ENCODE measurements at regions of chr17 and their contacts with region 1.

Region 1: DNA sequence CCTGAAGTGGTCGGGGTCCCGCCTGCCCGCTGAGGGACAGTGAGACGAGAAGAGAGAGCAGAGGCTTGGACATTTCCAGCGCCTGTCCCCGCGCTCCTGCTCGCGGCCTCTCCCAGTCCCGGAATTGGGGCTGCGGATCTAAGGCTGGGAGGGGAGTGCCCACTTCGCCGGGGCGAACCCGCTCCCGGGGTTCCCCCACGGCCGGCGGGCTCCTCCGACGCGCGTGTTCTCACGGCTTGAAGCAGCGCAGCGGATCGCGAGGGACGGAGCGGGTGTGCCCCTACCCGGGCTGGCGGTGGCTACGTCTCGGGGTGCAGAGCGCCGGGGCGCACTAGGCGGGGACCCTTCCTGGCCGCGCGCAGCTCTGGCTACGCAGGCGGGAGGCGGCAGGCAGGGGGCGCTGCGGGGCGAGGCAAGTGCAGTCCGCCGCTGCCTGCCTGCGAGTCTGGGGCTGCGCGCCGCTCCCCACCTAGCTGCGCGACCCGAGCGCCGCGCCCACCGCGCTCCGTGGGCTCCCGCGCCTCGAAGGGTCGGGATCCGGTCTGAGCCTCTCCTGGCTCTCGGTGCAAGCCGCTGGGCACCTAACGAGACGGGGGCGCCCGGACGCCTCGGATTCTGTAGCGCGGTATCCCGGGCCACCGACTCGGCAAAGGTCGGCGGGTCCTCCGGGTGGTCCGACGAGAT is 1.2 kb downstream of the NGFR start:
- DNase-seq: peak; percentile 89
- ATAC-seq: peak; percentile 83
- H3K4me3 Mint-ChIP-seq: peak overlapping the region; percentile 63
- H3K27ac Mint-ChIP-seq: no peak overlapping the region
- H3K4me1 Mint-ChIP-seq: peaks cover 22% of the 10 kb centered on the region
- H3K27me3 Mint-ChIP-seq: peaks cover 59% of the 10 kb centered on the region
- CTCF ChIP-seq: peak; percentile 86

Region 2: DNA sequence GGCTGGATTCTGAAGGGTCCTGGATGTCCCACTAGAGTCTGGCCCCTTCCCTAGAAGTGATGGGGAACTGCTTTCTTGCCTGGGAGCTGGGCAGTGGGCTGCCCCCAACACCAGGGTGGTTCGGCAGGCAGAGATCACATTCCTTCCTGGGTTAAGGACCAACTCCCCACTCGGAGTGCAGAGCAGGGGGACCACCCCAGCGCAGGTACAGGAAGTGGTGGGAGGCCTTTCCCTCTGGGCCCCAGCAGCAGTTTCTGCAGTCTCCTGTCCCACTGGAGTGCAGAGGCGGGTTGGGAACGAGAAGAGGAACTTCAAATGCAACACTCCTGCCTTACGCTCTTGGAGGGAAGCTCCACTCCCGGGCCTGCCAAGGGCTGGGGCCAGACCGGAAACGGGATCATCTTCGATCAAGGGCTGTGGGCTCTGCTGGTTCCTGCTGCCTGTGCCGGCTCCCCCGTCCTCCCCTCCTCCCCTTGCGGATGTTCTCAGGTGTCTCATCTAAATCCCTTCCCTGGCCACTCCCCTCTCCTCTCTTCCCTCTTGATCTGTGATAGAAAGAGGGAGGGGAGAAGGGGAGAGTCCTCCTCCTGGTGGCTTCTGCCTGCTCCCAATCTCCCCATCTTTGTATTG is 10.2 kb before region 1 on chr17:
- CTCF ChIA-PET with region 1: interaction called, 10 read pairs
- POLR2A ChIA-PET with region 1: no interaction called
- intact Hi-C with region 1: no loop called
- DNase-seq: peak; percentile 12
- ATAC-seq: no peak
- H3K4me3 Mint-ChIP-seq: no peak overlapping the region
- H3K27ac Mint-ChIP-seq: no peak overlapping the region
- H3K4me1 Mint-ChIP-seq: peaks cover 6% of the 10 kb centered on the region
- H3K27me3 Mint-ChIP-seq: peaks cover 36% of the 10 kb centered on the region
- CTCF ChIP-seq: no peak

Region 3: DNA sequence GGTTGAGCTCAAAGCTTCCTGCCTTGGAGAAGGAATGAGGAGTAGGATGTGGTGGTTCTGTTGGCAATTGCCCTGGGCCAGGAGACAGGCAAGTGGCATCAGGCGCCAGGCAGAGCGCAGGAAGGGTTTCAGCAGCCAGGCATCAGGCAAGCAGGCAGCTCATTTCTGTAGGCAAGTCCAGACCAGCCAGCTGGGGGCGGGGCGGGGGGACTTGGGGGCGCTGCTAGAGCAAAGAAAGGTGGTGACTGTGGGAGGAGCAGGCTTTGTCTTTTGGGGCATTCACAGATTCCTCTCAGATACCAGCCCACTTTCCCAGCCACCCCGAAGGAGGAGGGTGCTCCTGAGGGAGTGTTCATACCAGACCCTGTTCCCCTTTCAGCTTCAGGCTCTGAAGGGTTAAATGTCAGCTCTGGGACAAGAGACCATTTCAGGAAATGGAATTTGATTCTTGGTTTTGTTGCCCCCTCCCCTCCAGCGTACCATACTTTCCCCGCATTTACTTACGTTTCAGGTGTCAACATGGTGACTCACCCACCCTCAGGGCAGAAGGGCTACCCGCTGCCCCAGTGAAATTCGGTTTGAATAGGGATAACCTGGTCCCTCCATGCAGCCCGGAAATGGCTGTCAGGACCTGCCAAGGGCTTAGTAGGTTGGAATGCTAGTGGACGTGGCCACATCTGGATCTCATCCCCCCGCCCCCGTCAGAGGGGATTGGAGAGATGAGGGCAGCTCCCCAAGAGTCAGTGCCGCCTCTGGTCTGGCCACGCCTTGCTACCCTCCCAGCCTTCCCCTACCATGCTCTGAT is 11.9 kb after region 1 on chr17:
- CTCF ChIA-PET with region 1: interaction called, 39 read pairs
- POLR2A ChIA-PET with region 1: interaction called, 6 read pairs
- intact Hi-C with region 1: no loop called
- DNase-seq: no peak
- ATAC-seq: no peak
- H3K4me3 Mint-ChIP-seq: no peak overlapping the region
- H3K27ac Mint-ChIP-seq: no peak overlapping the region
- H3K4me1 Mint-ChIP-seq: no peaks in the 10 kb centered on the region
- H3K27me3 Mint-ChIP-seq: peaks cover 30% of the 10 kb centered on the region
- CTCF ChIP-seq: no peak

Region 4: GRCh38 chr17:49667854-49668253 is 171.5 kb after region 1 on chr17:
- CTCF ChIA-PET with region 1: no interaction called
- POLR2A ChIA-PET with region 1: no interaction called
- intact Hi-C with region 1: no loop called
- DNase-seq: no peak
- ATAC-seq: peak; percentile 37
- H3K4me3 Mint-ChIP-seq: no peak overlapping the region
- H3K27ac Mint-ChIP-seq: peak overlapping the region; percentile 30
- H3K4me1 Mint-ChIP-seq: peaks cover 55% of the 10 kb centered on the region
- H3K27me3 Mint-ChIP-seq: no peaks in the 10 kb centered on the region
- CTCF ChIP-seq: no peak

Measured in activated CD8-positive, alpha-beta T cell treated with anti-CD3 and anti-CD28 coated beads for 36 hours (primary cell).